ENCODE measurements at regions of chr12 and their contacts with region 1.

Region 1: DNA sequence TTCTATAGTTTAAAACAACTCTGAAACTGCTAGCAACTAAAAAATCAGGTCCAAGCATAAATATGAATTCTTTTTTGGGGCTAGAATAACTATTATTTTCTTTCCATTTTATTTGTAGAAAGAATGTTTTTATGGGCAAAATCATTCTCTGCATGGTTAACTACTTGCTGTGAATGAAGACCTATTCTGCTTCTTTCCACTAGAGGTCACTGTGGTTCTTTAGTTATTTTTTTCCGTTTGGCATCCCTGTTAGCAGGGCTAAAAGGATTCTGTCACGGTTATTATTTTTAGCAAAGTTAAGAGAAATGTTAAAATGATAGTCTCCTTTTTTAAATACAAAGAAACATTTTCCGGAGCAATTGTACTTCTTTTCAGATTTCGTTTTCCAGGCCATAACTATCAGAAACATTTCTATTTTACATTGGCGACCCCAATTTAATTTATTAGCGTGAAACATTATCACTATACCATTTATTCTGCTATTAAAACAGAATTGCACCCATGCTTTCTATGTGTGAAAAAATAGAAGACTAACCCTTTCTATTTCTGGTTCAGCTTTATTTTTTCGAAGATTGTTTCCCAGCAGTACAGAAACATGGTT is 404.8 kb downstream of the ATP23 start:
- DNase-seq: peak; percentile 62
- ATAC-seq: peak; percentile 77
- H3K4me3 ChIP-seq: no peak overlapping the region
- H3K27ac ChIP-seq: no peak overlapping the region
- H3K4me1 ChIP-seq: peaks cover 10% of the 10 kb centered on the region
- H3K27me3 ChIP-seq: no peaks in the 10 kb centered on the region
- CTCF ChIP-seq: peak; percentile 86
- POLR2A ChIP-seq: no peak
- RAD21 ChIP-seq: peak; percentile 92

Region 2: DNA sequence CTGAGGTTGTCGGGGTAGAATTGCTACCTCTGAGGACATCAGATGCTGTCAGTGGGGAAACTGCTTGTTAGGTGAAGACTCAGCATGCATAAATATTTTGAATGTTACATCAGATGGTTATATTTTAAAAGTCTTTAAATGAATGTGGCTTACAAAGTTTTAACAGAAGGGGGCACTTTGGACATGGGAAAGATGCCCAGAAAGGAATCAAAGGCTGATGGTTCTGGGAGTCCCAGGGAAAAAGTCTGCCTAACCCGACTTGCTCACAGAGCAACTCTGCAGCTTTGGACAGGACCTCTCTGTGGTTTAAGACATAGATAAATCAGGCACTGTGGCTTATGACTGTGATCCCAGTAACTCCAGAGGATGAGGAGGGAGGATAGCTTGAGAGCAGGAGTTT is 70.1 kb after region 1 on chr12:
- CTCF ChIA-PET with region 1: no interaction called
- POLR2A ChIA-PET with region 1: no interaction called
- dilution Hi-C with region 1: no loop called
- in situ Hi-C with region 1: no loop called
- intact Hi-C with region 1: loop called (anchors 2 kb)
- DNase-seq: peak; percentile 88
- ATAC-seq: peak; percentile 73
- H3K4me3 ChIP-seq: no peak overlapping the region
- H3K27ac ChIP-seq: peak overlapping the region; percentile 60
- H3K4me1 ChIP-seq: peaks cover 12% of the 10 kb centered on the region
- H3K27me3 ChIP-seq: no peaks in the 10 kb centered on the region
- CTCF ChIP-seq: peak; percentile 61
- POLR2A ChIP-seq: no peak
- RAD21 ChIP-seq: peak; percentile 70

Region 3: DNA sequence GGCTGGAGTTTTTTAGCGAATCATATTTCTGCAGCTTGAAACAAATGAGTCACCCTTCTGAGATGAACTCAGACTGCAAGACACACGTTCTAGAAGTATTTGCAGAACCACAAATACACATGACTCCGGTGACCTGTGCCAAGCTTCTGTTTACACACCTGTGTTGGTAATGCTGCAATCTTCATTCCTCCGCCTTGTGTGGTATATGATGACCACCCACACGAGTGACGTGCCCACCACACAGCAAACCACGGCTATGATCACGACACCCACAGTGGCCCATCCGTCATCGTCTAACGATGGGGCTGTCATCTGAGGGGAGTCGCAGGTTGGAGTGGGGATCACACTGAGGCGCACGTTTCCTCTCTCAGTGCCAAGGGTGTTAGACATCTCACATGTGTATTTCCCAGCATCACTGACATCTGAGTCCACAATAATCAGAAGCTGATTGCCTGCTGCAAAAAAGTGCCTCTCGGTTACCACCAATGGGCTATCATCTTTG is 531.2 kb after region 1 on chr12:
- CTCF ChIA-PET with region 1: no interaction called
- POLR2A ChIA-PET with region 1: no interaction called
- dilution Hi-C with region 1: no loop called
- in situ Hi-C with region 1: no loop called
- intact Hi-C with region 1: loop called (anchors 5 kb)
- DNase-seq: peak; percentile 100
- ATAC-seq: peak; percentile 90
- H3K4me3 ChIP-seq: no peak overlapping the region
- H3K27ac ChIP-seq: peak overlapping the region; percentile 0; the same call in 1 of the 2 replicates
- H3K4me1 ChIP-seq: peaks cover 3% of the 10 kb centered on the region; the same call in 1 of the 2 replicates
- H3K27me3 ChIP-seq: no peaks in the 10 kb centered on the region
- CTCF ChIP-seq: no peak
- POLR2A ChIP-seq: no peak
- RAD21 ChIP-seq: no peak

Region 4: DNA sequence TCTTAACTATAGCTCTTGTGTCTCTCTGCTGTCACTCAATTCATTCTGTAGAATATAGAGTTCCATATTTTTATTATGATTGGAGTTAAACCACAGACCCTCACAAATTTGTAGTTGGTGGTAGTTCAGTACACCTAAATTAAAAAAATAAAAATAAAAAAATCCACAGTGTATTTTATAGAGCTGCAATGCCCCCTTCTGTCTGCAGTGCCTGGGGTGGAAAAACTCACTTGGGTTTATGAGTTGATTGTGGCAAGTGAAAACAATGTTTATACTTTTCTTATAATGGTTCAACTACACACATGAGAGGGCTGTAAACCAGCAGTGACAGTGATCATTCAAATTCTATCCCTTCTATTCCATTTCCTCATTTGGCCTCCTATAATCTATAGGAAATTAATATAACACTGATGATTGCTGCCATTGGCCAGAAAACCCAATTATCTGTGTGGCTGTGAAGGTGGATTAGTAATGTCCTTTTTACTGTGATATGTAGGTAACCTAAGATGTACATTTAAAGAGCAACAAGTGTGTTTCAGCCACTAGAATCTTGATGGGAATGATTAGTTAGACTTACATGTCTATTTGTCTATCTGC is 741.0 kb after region 1 on chr12:
- CTCF ChIA-PET with region 1: no interaction called
- POLR2A ChIA-PET with region 1: no interaction called
- dilution Hi-C with region 1: no loop called
- in situ Hi-C with region 1: loop called (anchors 10 kb)
- intact Hi-C with region 1: loop called (anchors 1 kb)
- DNase-seq: peak; percentile 39
- ATAC-seq: peak; percentile 69
- H3K4me3 ChIP-seq: no peak overlapping the region
- H3K27ac ChIP-seq: no peak overlapping the region
- H3K4me1 ChIP-seq: peaks cover 13% of the 10 kb centered on the region
- H3K27me3 ChIP-seq: no peaks in the 10 kb centered on the region
- CTCF ChIP-seq: peak; percentile 81
- POLR2A ChIP-seq: no peak
- RAD21 ChIP-seq: peak; percentile 74

Region 5: DNA sequence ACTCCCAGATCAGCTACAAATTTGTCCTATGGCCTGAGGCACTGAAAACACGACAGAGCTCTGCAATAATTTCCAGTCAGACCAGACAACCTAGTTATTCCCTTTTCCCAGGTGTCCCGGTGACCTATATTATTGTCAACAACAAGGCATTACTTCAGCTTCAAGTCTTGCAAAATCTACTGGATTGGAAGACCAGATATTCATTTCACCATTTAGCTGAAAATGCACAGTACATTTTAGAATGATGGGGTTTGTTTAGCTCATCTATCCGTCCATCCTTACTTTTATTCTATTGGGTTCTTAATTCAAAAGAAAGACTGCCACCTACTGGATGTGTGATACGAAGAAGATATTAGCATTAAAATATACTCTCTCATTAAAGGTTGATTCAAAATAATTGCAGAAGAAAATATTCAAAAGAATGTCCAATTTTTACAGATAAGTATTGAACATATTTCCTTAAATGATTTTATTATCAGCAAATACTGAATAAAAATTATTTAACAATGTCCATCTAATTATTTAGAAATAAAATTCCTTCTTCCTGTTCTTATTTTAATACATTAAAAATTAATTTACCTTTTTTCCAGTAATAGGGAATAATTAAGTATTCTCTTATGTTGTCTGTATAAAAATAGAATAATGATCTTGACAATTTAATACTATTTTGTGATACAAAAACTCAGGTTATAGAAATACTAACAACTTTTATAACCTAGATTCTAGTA is 819.0 kb after region 1 on chr12:
- CTCF ChIA-PET with region 1: no interaction called
- POLR2A ChIA-PET with region 1: no interaction called
- dilution Hi-C with region 1: no loop called
- in situ Hi-C with region 1: no loop called
- intact Hi-C with region 1: loop called (anchors 5 kb)
- DNase-seq: peak; percentile 64
- ATAC-seq: peak; percentile 72; the same call in 1 of the 2 replicates
- H3K4me3 ChIP-seq: no peak overlapping the region
- H3K27ac ChIP-seq: no peak overlapping the region
- H3K4me1 ChIP-seq: peaks cover 2% of the 10 kb centered on the region; the same call in 1 of the 2 replicates
- H3K27me3 ChIP-seq: no peaks in the 10 kb centered on the region
- CTCF ChIP-seq: peak; percentile 61
- POLR2A ChIP-seq: no peak
- RAD21 ChIP-seq: peak; percentile 49